Caco-2 (cell line): ENCODE measurements at regions of chr17 and their contacts with region 1.

Region 1: GRCh38 chr17:47970704-47971463 is at the start of gene CDK5RAP3:
- DNase-seq: peak; percentile 100
- H3K4me3 ChIP-seq: peak within 1 kb of the TSS; percentile 72
- H3K4me3 Mint-ChIP-seq: peak within 1 kb of the TSS; percentile 94
- H3K27ac Mint-ChIP-seq: peak within 1 kb of the TSS; percentile 92
- H3K4me1 ChIP-seq: peaks cover 40% of the 10 kb centered on the region
- H3K4me1 Mint-ChIP-seq: peaks cover 30% of the 10 kb centered on the region
- H3K27me3 ChIP-seq: no peaks in the 10 kb centered on the region
- H3K27me3 Mint-ChIP-seq: no peaks in the 10 kb centered on the region
- CTCF ChIP-seq: peak; percentile 99 to 100
- total RNA-seq, gene CDK5RAP3: 425 and 427 TPM in 2 replicates

Region 2: GRCh38 chr17:47188876-47189731 is 781.8 kb before region 1 on chr17 and contains the start of gene CDC27:
- CTCF ChIA-PET with region 1: no interaction called
- POLR2A ChIA-PET with region 1: no interaction called
- intact Hi-C with region 1: no loop called
- DNase-seq: peak; percentile 98 to 100
- H3K4me3 ChIP-seq: peak within 1 kb of the TSS; percentile 79
- H3K4me3 Mint-ChIP-seq: peak within 1 kb of the TSS; percentile 99
- H3K27ac Mint-ChIP-seq: peak within 1 kb of the TSS; percentile 96
- H3K4me1 ChIP-seq: peaks cover 12% of the 10 kb centered on the region
- H3K4me1 Mint-ChIP-seq: peaks cover 35% of the 10 kb centered on the region
- H3K27me3 ChIP-seq: no peaks in the 10 kb centered on the region
- H3K27me3 Mint-ChIP-seq: no peaks in the 10 kb centered on the region
- CTCF ChIP-seq: no peak
- total RNA-seq, gene CDC27: 92.6 and 104 TPM in 2 replicates

Region 3: GRCh38 chr17:47840740-47841603 is 129.9 kb before region 1 on chr17 and contains the start of gene SCRN2:
- CTCF ChIA-PET with region 1: interaction called, 13 read pairs
- POLR2A ChIA-PET with region 1: interaction called, 5 read pairs
- intact Hi-C with region 1: loop called (anchors 1 kb)
- DNase-seq: peak; percentile 98 to 100
- H3K4me3 ChIP-seq: peak within 1 kb of the TSS; percentile 63
- H3K4me3 Mint-ChIP-seq: peak within 1 kb of the TSS; percentile 80
- H3K27ac Mint-ChIP-seq: peak within 1 kb of the TSS; percentile 76
- H3K4me1 ChIP-seq: peaks cover 47% of the 10 kb centered on the region
- H3K4me1 Mint-ChIP-seq: peaks cover 44% of the 10 kb centered on the region
- H3K27me3 ChIP-seq: no peaks in the 10 kb centered on the region
- H3K27me3 Mint-ChIP-seq: no peaks in the 10 kb centered on the region
- CTCF ChIP-seq: peak; percentile 100
- total RNA-seq, gene SCRN2: 73.6 and 80.8 TPM in 2 replicates

Region 4: GRCh38 chr17:47941236-47941994 is 29.5 kb before region 1 on chr17 and contains the start of gene PNPO:
- CTCF ChIA-PET with region 1: interaction called, 219 read pairs
- POLR2A ChIA-PET with region 1: interaction called, 70 read pairs
- intact Hi-C with region 1: no loop called
- DNase-seq: peak; percentile 100
- H3K4me3 ChIP-seq: peak within 1 kb of the TSS; percentile 69
- H3K4me3 Mint-ChIP-seq: peak within 1 kb of the TSS; percentile 82
- H3K27ac Mint-ChIP-seq: peak within 1 kb of the TSS; percentile 75
- H3K4me1 ChIP-seq: peaks cover 12% of the 10 kb centered on the region; the same call in 1 of the 2 replicates
- H3K4me1 Mint-ChIP-seq: peaks cover 23% of the 10 kb centered on the region
- H3K27me3 ChIP-seq: no peaks in the 10 kb centered on the region
- H3K27me3 Mint-ChIP-seq: no peaks in the 10 kb centered on the region
- CTCF ChIP-seq: peak; percentile 45 to 48
- total RNA-seq, gene PNPO: 110 and 118 TPM in 2 replicates

Region 5: GRCh38 chr17:47957591-47958428 is 13.1 kb before region 1 on chr17 and contains the start of gene PRR15L:
- CTCF ChIA-PET with region 1: interaction called, 172 read pairs
- POLR2A ChIA-PET with region 1: interaction called, 64 read pairs
- intact Hi-C with region 1: loop called (anchors 1 kb)
- DNase-seq: peak; percentile 89 to 93
- H3K4me3 ChIP-seq: peak within 1 kb of the TSS; percentile 59
- H3K4me3 Mint-ChIP-seq: peak within 1 kb of the TSS; percentile 67
- H3K27ac Mint-ChIP-seq: peak within 1 kb of the TSS; percentile 35
- H3K4me1 ChIP-seq: peaks cover 67% of the 10 kb centered on the region
- H3K4me1 Mint-ChIP-seq: peaks cover 53% of the 10 kb centered on the region
- H3K27me3 ChIP-seq: no peaks in the 10 kb centered on the region
- H3K27me3 Mint-ChIP-seq: no peaks in the 10 kb centered on the region
- CTCF ChIP-seq: no peak
- total RNA-seq, gene PRR15L: 24.3 and 30.5 TPM in 2 replicates

Region 6: DNA sequence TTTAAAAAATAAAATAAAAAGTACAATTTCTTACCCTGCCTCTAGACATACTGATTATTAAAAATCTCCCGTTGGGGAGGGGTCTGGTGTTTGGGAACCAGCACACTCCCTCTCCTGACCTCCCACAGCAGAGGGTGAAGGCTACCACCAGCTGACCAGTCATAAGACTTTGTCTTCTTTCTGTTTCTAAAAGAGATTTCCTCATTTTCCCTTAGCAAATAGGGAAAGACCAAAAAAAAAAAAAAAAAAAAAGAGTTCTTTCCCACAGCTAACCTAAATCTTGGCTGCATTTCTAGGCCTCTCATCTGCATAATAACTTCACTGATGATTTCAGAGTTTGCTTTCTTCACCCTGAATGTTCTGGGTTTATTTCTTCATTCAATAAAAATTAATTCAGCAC is 30.3 kb after region 1 on chr17:
- CTCF ChIA-PET with region 1: interaction called, 12 read pairs
- POLR2A ChIA-PET with region 1: interaction called, 11 read pairs
- intact Hi-C with region 1: no loop called
- DNase-seq: no peak
- H3K4me3 ChIP-seq: no peak overlapping the region
- H3K4me3 Mint-ChIP-seq: no peak overlapping the region
- H3K27ac Mint-ChIP-seq: no peak overlapping the region
- H3K4me1 ChIP-seq: peaks cover 9% of the 10 kb centered on the region
- H3K4me1 Mint-ChIP-seq: peaks cover 11% of the 10 kb centered on the region
- H3K27me3 ChIP-seq: no peaks in the 10 kb centered on the region
- H3K27me3 Mint-ChIP-seq: no peaks in the 10 kb centered on the region
- CTCF ChIP-seq: no peak

Region 7: DNA sequence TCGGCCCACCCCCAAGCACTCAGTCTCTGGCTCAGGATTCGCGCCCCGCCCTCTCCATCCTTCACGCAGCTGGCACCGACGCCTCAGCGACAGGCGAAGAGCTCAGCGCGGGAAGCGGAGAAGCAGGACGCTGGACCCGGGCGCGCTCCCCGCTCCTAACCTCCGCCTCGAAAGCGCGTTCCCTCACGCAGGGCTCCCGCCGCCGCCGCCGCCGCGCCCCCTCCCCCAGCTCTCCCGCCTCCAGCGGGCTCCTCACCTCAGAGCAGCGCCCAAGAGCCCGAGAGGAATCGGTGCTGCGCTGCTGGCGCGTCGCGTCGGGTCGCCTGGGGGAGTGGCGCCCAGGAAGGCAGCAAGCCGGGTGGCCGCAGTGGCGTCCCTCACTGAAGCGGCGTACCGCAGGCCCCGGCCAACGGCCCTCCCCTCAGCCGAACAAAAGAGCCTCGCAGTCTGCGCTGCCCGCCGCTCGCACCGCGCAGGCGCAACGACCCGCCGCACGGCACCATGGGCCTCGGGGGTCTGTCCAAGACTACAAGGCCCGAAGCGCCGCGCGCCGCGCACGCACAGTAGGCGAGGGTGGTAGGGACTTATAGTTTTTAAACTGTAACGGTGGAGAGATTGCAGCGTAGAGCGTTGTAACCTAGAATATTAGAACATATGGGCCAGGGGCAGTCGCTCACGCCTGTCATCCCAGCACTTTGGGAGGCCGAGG is 130.3 kb after region 1 on chr17 and contains the start of gene CBX1:
- CTCF ChIA-PET with region 1: interaction called, 8 read pairs
- POLR2A ChIA-PET with region 1: interaction called, 3 read pairs
- intact Hi-C with region 1: loop called (anchors 1 kb)
- DNase-seq: peak; percentile 99 to 100
- H3K4me3 ChIP-seq: peak within 1 kb of the TSS; percentile 83
- H3K4me3 Mint-ChIP-seq: peak within 1 kb of the TSS; percentile 93
- H3K27ac Mint-ChIP-seq: peak within 1 kb of the TSS; percentile 79
- H3K4me1 ChIP-seq: peaks cover 8% of the 10 kb centered on the region
- H3K4me1 Mint-ChIP-seq: peaks cover 7% of the 10 kb centered on the region
- H3K27me3 ChIP-seq: no peaks in the 10 kb centered on the region
- H3K27me3 Mint-ChIP-seq: no peaks in the 10 kb centered on the region
- CTCF ChIP-seq: no peak
- total RNA-seq, gene CBX1: 213 and 214 TPM in 2 replicates